AG04450 (cell line): ENCODE measurements at regions of chr5 and their contacts with region 1.

Region 1: GRCh38 chr5:141557681-141558136 is 61.1 kb downstream of the DIAPH1 start:
- DNase-seq: peak; percentile 97
- H3K4me3 ChIP-seq: peak overlapping the region; percentile 25; the same call in 1 of the 2 replicates
- H3K27ac ChIP-seq: peak overlapping the region; percentile 84
- H3K27me3 ChIP-seq: no peaks in the 10 kb centered on the region
- CTCF ChIP-seq: peak; percentile 84

Region 2: DNA sequence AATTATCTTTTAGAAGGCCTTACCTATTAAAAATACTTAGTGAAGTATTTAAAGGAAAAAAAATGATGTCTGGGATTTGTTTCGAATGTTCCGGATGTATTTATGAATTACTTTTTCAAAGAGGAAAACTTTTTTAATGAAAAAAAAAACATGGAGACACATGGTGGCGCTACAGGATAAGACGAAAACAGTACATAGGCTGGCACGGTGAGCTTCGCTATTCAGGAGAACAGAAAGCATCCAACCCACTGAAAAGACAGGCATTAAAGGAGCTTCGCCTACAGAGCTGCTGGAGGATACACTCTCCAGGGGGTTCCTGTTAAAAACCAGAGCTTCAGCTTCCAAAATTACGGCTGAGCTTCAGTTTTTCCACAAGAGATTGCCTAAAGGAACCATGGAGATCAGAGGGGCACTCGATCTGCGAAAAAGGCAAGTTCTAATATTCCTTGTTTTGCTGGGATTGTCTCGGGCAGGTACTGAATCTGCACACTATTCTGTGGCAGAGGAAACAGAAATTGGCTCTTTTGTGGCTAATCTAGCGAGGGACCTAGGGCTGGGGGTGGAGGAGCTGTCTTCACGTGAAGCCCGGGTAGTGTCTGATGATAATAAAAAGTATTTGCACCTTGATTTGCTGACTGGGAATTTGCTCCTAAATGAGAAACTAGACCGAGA is 334.5 kb before region 1 on chr5 and contains the start of gene PCDHB14:
- CTCF ChIA-PET with region 1: interaction called, 13 read pairs
- POLR2A ChIA-PET with region 1: no interaction called
- DNase-seq: no peak
- H3K4me3 ChIP-seq: peak within 1 kb of the TSS; percentile 33
- H3K27ac ChIP-seq: no peak within 1 kb of the TSS
- H3K27me3 ChIP-seq: no peaks in the 10 kb centered on the region
- CTCF ChIP-seq: no peak
- polyA plus RNA-seq, gene PCDHB14: 0.98 and 1.1 TPM in 2 replicates

Region 3: GRCh38 chr5:141349917-141350619 is 207.6 kb before region 1 on chr5 and contains the start of gene PCDHGB1:
- CTCF ChIA-PET with region 1: interaction called, 46 read pairs
- POLR2A ChIA-PET with region 1: no interaction called
- DNase-seq: no peak
- H3K4me3 ChIP-seq: peak within 1 kb of the TSS; percentile 46
- H3K27ac ChIP-seq: no peak within 1 kb of the TSS
- H3K27me3 ChIP-seq: peaks cover 2% of the 10 kb centered on the region
- CTCF ChIP-seq: peak; percentile 54
- polyA plus RNA-seq, gene PCDHGB1: 3.2 TPM in 2 replicates

Region 4: DNA sequence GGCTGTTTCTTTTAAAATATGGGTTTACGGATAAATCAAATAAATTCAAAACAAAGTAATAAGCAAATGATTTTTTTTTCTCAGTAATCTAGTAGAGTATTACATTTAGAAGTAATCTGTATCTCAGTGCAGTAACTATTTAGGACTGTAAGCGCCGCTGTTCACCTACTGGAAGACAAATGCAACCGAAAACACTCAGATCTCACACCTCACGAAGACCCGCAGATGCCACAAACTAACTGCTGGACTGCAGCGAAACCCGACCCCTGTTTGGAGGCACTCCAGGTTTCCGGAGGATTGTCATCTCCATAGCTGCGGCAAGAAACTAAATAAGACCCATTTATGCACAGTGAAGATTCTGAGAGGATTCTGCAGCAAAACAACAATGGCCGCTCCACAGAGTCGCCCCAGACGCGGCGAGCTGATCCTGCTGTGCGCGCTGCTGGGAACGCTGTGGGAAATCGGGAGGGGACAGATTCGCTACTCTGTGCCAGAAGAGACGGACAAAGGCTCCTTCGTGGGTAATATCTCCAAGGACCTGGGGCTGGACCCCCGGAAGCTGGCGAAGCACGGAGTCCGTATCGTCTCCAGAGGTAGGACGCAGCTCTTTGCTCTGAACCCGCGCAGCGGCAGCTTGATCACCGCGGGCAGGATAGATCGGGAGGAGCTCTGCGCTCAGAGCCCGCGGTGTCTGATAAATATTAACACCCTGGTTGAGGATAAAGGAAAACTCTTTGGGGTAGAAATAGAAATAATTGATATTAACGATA is 165.1 kb before region 1 on chr5 and contains the start of gene PCDHGA8:
- CTCF ChIA-PET with region 1: interaction called, 40 read pairs
- POLR2A ChIA-PET with region 1: no interaction called
- DNase-seq: no peak
- H3K4me3 ChIP-seq: 0 out of 2 replicates have a peak within 1 kb of the TSS, but pooled peaks have one; percentile 17
- H3K27ac ChIP-seq: no peak within 1 kb of the TSS
- H3K27me3 ChIP-seq: no peaks in the 10 kb centered on the region
- CTCF ChIP-seq: peak; percentile 23; the same call in 1 of the 2 replicates
- polyA plus RNA-seq, gene PCDHGA8: 0.93 and 1.1 TPM in 2 replicates

Region 5: DNA sequence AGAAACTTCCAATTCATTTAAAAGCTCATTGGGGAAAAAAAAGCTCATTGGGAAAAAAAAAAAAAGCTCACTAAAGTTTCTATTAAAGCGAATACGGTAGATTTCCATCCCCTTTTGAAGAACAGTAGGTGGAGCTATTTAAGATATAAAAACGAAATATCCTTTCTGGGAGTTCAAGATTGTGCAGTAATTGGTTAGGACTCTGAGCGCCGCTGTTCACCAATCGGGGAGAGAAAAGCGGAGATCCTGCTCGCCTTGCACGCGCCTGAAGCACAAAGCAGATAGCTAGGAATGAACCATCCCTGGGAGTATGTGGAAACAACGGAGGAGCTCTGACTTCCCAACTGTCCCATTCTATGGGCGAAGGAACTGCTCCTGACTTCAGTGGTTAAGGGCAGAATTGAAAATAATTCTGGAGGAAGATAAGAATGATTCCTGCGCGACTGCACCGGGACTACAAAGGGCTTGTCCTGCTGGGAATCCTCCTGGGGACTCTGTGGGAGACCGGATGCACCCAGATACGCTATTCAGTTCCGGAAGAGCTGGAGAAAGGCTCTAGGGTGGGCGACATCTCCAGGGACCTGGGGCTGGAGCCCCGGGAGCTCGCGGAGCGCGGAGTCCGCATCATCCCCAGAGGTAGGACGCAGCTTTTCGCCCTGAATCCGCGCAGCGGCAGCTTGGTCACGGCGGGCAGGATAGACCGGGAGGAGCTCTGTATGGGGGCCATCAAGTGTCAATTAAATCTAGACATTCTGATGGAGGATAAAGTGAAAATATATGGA is 127.2 kb before region 1 on chr5 and contains the start of gene PCDHGA12:
- CTCF ChIA-PET with region 1: interaction called, 94 read pairs
- POLR2A ChIA-PET with region 1: no interaction called
- DNase-seq: no peak
- H3K4me3 ChIP-seq: peak within 1 kb of the TSS; percentile 37
- H3K27ac ChIP-seq: peak within 1 kb of the TSS; percentile 52
- H3K27me3 ChIP-seq: no peaks in the 10 kb centered on the region
- CTCF ChIP-seq: peak; percentile 43; the same call in 1 of the 2 replicates
- polyA plus RNA-seq, gene PCDHGA12: 3.4 and 4.3 TPM in 2 replicates

Region 6: DNA sequence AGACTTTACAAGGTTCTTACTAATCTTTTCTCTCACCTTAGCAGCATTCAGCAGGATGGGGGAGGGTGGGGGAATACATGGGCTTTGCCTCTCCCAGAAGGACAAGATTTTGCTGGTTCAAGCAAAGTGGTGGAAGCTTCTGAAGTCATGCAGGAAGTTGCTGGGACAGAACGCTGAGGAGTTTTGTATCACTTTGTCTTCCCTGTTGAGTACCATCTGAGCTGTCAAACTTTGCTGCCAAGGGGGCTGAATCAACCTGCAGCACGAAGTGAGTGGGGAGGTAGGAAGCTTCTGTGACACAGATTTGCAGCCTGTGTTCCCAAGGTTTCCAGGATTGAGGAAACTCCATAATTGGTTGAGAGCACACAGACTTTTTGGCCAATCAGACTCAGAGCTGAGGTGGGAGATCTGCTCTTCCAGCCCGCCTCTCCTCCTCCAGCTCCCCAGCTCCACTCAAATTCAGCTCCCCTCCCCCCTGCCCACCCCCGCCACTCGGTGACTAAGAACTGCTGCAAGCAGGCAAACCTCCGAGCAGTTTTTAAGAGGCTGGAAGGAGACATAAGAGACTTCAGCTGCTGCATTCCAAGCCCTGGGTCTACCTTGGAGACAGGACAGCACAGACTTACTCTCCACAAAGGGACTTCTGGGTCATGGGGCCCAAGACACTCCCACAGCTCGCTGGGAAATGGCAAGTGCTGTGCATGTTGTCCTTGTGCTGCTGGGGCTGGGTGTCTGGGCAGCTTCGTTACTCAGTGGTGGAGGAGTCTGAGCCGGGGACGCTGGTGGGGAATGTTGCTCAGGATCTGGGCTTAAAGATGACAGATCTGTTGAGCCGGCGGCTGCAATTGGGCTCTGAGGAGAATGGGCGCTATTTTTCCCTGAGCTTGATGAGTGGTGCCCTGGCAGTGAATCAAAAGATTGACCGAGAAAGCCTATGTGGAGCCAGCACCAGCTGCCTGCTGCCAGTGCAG is 68.8 kb before region 1 on chr5 and contains the start of gene PCDHGC5:
- CTCF ChIA-PET with region 1: interaction called, 11 read pairs
- POLR2A ChIA-PET with region 1: no interaction called
- DNase-seq: peak; percentile 56
- H3K4me3 ChIP-seq: peak within 1 kb of the TSS; percentile 38
- H3K27ac ChIP-seq: peak within 1 kb of the TSS; percentile 65
- H3K27me3 ChIP-seq: no peaks in the 10 kb centered on the region
- CTCF ChIP-seq: no peak
- polyA plus RNA-seq, gene PCDHGC5: 2.4 and 2.5 TPM in 2 replicates

Region 7: DNA sequence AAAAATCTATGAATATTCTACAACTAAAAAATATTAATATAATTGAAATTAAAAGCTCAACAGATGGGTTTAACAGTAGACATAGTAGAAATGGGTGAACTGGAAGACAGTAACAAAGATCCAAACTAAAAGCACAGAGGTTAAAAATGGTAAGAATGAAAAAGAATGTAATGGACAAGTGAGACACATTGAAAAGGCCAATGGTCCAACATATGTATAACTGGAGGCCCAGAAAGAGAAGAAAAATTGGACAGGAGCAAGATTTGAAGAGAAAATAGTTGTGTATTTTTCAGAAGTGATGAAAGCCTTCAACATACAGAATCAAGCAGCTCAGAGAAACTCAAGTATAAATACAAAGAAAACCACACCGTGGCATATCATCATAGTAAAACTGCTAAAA is 10.2 kb before region 1 on chr5:
- CTCF ChIA-PET with region 1: interaction called, 13 read pairs
- POLR2A ChIA-PET with region 1: no interaction called
- DNase-seq: no peak
- H3K4me3 ChIP-seq: no peak overlapping the region
- H3K27ac ChIP-seq: no peak overlapping the region
- H3K27me3 ChIP-seq: no peaks in the 10 kb centered on the region
- CTCF ChIP-seq: no peak

Region 8: DNA sequence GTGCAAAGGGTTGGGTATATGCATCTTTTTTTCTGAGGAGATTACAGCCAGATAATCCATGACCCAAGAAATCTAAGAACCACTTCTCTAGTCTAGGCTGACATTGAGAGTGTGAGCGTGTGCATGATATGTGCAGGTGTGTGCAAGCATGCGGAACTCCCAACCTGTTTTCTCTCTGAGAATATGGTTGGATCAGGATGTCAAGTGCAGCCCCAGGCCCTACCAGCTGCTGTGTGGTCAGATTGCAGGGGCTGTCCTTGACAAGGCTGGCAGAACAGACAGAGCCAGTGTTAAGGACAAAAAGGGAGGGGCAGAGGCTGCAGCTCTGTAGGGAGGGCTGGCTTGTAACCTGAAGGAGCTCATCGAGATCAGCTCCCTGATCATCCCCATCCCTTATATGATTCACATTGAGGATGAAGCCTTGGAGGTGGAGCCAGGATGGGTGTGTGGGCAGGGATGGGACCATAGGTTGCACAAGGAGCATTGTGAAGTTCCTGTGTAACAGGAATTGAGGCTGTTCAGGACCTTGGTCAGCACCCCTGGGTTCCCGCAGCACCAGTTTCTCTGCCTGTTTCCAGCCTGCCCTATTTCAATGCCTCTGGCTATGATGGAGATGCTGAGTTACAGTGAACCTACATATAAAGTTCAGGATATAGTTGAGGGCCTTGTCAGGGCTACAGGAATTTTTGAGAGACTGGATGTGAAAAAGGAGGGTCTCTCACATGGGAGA is 177.0 kb after region 1 on chr5:
- CTCF ChIA-PET with region 1: no interaction called
- POLR2A ChIA-PET with region 1: no interaction called
- DNase-seq: peak; percentile 7
- H3K4me3 ChIP-seq: no peak overlapping the region
- H3K27ac ChIP-seq: no peak overlapping the region
- H3K27me3 ChIP-seq: peaks cover 14% of the 10 kb centered on the region
- CTCF ChIP-seq: no peak